ENCODE measurements at regions of chr2 and their contacts with region 1.

Region 1: DNA sequence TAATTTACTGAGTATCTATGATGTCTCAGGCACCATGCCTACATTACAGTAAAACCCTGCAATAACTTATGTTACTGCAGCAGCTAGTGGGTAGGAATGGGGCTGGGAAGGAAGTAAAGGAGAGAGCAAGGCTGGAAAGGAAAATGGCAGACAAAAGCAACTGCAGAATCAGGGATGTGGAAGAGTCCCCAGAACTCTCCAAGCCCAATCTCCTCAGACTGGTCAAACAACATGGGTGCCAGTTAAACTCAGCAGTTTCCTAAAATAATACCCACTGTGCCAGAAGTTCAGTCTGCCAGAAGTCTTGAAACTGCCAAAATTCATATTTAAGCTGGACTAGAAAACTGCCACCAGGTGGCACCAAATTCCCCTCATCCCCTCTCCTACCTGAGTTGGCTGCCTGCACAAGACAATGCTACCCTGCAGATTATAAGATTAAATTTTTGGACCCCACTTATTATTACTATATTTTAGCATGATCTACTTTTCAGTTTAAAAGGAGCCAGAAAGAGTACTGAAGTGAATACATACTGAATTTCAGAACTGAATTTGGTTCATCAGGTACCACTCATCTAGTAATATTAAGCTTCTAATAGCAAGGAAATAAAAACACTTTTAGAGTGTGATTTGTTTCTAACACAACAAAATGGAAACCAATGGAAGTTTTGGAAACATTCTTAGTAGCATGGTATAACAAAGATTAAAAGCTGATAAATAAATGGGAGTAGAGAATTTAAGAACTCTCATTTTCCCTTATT is 86.8 kb upstream of the DNER start:
- DNase-seq: peak; percentile 88
- H3K4me3 Mint-ChIP-seq: no peak overlapping the region
- H3K27ac Mint-ChIP-seq: no peak overlapping the region
- H3K4me1 Mint-ChIP-seq: no peaks in the 10 kb centered on the region
- H3K27me3 Mint-ChIP-seq: no peaks in the 10 kb centered on the region

Region 2: GRCh38 chr2:229815858-229816257 is 14.7 kb after region 1 on chr2:
- CTCF ChIA-PET with region 1: interaction called, 20 read pairs
- intact Hi-C with region 1: no loop called
- DNase-seq: no peak
- H3K4me3 Mint-ChIP-seq: no peak overlapping the region
- H3K27ac Mint-ChIP-seq: no peak overlapping the region
- H3K4me1 Mint-ChIP-seq: no peaks in the 10 kb centered on the region
- H3K27me3 Mint-ChIP-seq: no peaks in the 10 kb centered on the region

Region 3: DNA sequence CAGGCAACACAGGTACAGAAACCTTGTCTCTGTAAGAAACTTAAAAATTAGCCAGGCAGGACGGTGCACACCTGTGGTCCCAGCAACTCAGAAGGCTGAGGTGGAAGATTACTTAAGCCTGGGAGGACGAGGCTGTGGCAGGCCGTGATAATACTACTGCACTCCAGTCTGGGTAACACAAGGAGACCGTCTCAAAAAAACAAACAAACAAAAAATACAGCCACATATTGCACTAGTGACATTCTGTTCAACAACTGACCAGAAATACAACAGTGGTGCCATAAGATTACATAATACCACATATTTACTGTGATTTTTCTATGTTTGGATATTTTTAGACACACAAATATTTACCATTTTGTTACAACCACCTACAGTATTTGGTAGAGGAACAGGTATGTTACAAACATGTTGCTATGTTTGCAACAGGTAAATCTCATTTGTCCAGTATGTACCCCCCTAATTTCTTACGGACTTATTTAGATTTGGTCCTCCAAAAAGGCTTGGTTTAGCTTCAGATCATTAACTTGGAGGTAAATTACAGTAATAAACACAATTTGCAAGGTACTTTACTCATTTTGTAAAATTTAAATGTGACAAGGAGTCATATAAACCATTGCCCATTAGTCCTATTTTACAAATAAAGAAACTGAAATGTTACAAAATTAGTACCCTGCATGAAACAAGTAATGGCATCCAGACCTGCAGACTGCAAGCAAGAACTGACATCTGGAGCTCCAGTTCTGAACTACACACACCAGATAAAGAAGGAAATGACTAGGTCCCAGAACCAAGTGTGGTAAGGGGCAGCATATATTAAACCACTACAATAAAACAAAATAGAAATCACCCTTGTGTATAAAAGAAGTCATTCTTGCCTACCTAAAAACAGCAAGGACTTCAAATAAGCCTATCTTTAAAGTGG is 83.9 kb after region 1 on chr2:
- CTCF ChIA-PET with region 1: interaction called, 5 read pairs
- intact Hi-C with region 1: loop called (anchors 1 kb)
- DNase-seq: no peak
- H3K4me3 Mint-ChIP-seq: no peak overlapping the region
- H3K27ac Mint-ChIP-seq: no peak overlapping the region
- H3K4me1 Mint-ChIP-seq: peaks cover 53% of the 10 kb centered on the region
- H3K27me3 Mint-ChIP-seq: no peaks in the 10 kb centered on the region

Region 4: DNA sequence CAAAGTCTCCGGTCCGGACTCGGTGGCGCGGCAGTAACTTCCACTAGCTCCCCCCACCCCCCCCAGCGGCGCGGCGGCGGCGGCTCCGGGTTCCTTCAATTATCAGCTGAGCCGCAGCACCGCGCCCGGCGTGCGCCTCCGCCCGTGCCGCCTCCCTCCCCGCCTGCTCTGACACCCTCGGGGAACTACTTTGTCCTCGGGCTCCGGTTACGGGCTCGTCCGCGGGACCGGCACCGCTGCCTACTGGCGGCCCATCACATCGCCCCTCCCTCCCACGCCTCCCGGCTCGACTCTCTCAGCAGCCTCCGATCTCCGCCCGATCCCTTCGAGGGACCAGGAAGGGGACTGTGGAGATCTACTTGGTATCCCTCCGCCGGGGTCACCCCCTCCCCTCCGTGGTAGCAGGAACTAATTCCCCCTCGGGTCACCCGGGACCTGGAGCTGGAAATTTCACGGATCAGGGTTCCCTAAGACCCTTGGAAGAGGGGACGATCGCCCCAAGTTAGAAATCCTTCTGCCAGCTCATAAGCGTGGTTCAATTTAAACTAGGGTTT is 120.8 kb after region 1 on chr2 and contains the start of gene TRIP12:
- CTCF ChIA-PET with region 1: interaction called, 6 read pairs
- intact Hi-C with region 1: loop called (anchors 2 kb)
- DNase-seq: peak; percentile 91
- H3K4me3 Mint-ChIP-seq: peak within 1 kb of the TSS; percentile 90
- H3K27ac Mint-ChIP-seq: peak within 1 kb of the TSS; percentile 99
- H3K4me1 Mint-ChIP-seq: peaks cover 34% of the 10 kb centered on the region
- H3K27me3 Mint-ChIP-seq: no peaks in the 10 kb centered on the region
- total RNA-seq, gene TRIP12: 188 to 190 TPM

Region 5: GRCh38 chr2:230007931-230008707 is 206.9 kb after region 1 on chr2:
- CTCF ChIA-PET with region 1: no interaction called
- intact Hi-C with region 1: loop called (anchors 5 kb)
- DNase-seq: peak; percentile 95
- H3K4me3 Mint-ChIP-seq: no peak overlapping the region
- H3K27ac Mint-ChIP-seq: no peak overlapping the region
- H3K4me1 Mint-ChIP-seq: peaks cover 5% of the 10 kb centered on the region
- H3K27me3 Mint-ChIP-seq: no peaks in the 10 kb centered on the region

Region 6: DNA sequence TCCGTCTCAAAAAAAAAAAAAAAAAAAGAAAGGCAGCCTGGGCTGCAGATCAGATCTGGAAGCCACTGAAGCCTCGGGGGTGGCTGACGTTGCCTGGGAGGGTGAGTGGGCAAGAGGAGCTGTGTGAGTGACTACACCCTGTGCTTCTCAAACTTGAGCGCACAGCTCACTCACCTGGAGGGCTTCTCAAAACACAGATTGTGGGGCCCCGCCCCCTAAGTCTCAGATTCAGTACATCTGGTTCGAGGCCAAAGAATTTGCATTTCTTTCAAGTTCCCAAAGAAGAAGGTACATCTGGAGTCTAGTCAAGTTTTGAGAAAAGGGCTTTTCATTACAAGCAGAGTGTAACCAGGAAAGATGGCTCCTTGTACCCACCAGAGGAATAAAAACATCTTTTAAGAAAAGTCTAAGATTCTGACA is 813.7 kb after region 1 on chr2:
- CTCF ChIA-PET with region 1: interaction called, 5 read pairs
- intact Hi-C with region 1: loop called (anchors 5 kb)
- DNase-seq: peak; percentile 79
- H3K4me3 Mint-ChIP-seq: no peak overlapping the region
- H3K27ac Mint-ChIP-seq: peak overlapping the region; percentile 71
- H3K4me1 Mint-ChIP-seq: peaks cover 33% of the 10 kb centered on the region
- H3K27me3 Mint-ChIP-seq: no peaks in the 10 kb centered on the region

Measured in activated naive CD4-positive, alpha-beta T cell treated with anti-CD3 and anti-CD28 coated beads for 36 hours (primary cell).